H1 (cell line): ENCODE measurements at regions of chr17 and their contacts with region 1.

Region 1: DNA sequence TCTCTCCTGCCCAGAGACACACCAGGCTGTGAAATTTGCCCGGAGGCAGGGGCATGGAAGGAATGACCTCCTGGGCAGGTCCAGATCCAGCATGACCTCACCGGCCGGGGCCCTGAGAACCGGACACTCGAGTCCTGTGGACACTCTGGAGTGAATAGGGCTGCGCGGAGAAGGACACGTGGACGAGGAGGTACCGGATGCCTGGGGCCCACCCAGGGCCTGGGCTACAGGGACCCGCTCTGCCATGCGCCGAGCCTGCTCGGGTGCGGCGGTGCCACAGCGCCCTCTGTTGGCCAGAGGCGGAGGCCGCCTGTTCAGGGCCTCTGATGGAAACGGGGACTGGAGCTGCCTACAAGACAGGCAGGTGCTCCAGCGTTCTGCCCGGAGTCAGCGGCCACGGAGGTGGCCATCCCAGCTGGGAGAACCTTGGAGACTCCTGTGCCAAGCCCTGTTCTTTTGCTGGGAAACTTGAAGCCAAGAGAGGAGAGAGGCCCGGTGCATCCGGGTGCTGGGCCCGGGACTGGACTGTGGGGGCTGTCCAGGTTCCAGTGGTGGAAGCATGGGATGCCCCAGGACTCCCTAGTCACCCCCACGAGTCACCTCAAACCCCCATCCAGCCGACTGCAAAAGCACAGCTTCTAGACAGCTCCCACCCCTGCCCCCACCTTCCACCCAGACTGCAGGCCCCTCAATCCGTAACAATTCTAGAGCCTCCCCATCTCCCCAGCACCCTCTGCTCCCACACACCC is 19.3 kb upstream of the NXPH3 start:
- DNase-seq: peak in 1 of 2 experiments; percentile 98
- H3K4me3 ChIP-seq: peak overlapping the region in 1 of 4 experiments; percentile 15; a peak in 1 of 8 replicates
- H3K27ac ChIP-seq: no peak overlapping the region
- H3K4me1 ChIP-seq: no peaks in the 10 kb centered on the region
- H3K27me3 ChIP-seq: peaks cover 0 to 3% (median 1%) of the 10 kb centered on the region in 4 experiments; a peak in 2 of 7 replicates
- CTCF ChIP-seq: peak; percentile 94 to 98 (median 98)
- EP300 ChIP-seq: peak in 1 of 2 experiments; percentile 36; a peak in 1 of 3 replicates
- POLR2A ChIP-seq: no peak
- RAD21 ChIP-seq: peak; percentile 97 to 99

Region 2: DNA sequence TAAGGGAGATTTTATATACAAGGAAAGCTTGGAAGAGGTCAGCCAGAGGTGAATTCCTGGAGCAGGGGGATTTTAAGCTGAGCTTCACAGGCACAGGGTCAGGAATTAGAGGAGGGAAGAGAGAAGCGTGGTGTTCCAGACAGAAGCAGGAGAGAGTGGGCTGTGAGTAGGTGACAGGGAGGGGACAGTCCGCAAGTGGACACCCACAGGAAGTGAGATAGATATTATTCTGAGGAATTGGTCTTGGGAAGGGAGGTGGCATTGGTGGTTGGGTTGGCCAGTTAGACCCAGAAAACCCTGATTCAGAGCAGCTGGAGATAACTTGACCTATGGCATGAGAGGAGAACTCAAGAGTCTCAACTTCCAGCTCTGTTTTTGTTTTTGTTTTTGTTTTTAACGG is 156.4 kb before region 1 on chr17:
- CTCF ChIA-PET with region 1: interaction called, 138 read pairs
- POLR2A ChIA-PET with region 1: no interaction called
- DNase-seq: no peak
- H3K4me3 ChIP-seq: no peak overlapping the region
- H3K27ac ChIP-seq: no peak overlapping the region
- H3K4me1 ChIP-seq: no peaks in the 10 kb centered on the region
- H3K27me3 ChIP-seq: no peaks in the 10 kb centered on the region
- CTCF ChIP-seq: no peak
- EP300 ChIP-seq: no peak
- POLR2A ChIP-seq: no peak
- RAD21 ChIP-seq: no peak

Region 3: GRCh38 chr17:49434821-49435670 is 121.4 kb before region 1 on chr17:
- CTCF ChIA-PET with region 1: interaction called, 146 read pairs
- POLR2A ChIA-PET with region 1: no interaction called
- DNase-seq: peak; percentile 38 to 87
- H3K4me3 ChIP-seq: no peak overlapping the region
- H3K27ac ChIP-seq: no peak overlapping the region
- H3K4me1 ChIP-seq: peaks cover 0 to 26% (median 12%) of the 10 kb centered on the region in 4 experiments; a peak in 6 of 7 replicates
- H3K27me3 ChIP-seq: peaks cover 0 to 15% (median 4%) of the 10 kb centered on the region in 4 experiments; a peak in 3 of 7 replicates
- CTCF ChIP-seq: peak; percentile 78 to 86 (median 82)
- EP300 ChIP-seq: no peak; a peak in 1 of 3 replicates
- POLR2A ChIP-seq: no peak
- RAD21 ChIP-seq: peak; percentile 88 to 90

Region 4: GRCh38 chr17:49486012-49486641 is 70.3 kb before region 1 on chr17:
- CTCF ChIA-PET with region 1: interaction called, 28 read pairs
- POLR2A ChIA-PET with region 1: no interaction called
- DNase-seq: peak; percentile 75 to 82
- H3K4me3 ChIP-seq: peak overlapping the region; percentile 1 to 46 (median 22); a peak in 5 of 8 replicates
- H3K27ac ChIP-seq: peak overlapping the region; percentile 43; the same call in 1 of the 2 replicates
- H3K4me1 ChIP-seq: peaks cover 7 to 30% (median 22%) of the 10 kb centered on the region in 4 experiments
- H3K27me3 ChIP-seq: no peaks in the 10 kb centered on the region; a peak in 2 of 7 replicates
- CTCF ChIP-seq: no peak
- EP300 ChIP-seq: no peak
- POLR2A ChIP-seq: peak in 1 of 2 experiments; percentile 80; a peak in 2 of 3 replicates
- RAD21 ChIP-seq: no peak

Region 5: GRCh38 chr17:49528966-49529365 is 27.4 kb before region 1 on chr17:
- CTCF ChIA-PET with region 1: interaction called, 22 read pairs
- POLR2A ChIA-PET with region 1: no interaction called
- DNase-seq: no peak
- H3K4me3 ChIP-seq: no peak overlapping the region
- H3K27ac ChIP-seq: no peak overlapping the region
- H3K4me1 ChIP-seq: no peaks in the 10 kb centered on the region; a peak in 1 of 7 replicates
- H3K27me3 ChIP-seq: no peaks in the 10 kb centered on the region
- CTCF ChIP-seq: no peak
- EP300 ChIP-seq: no peak
- POLR2A ChIP-seq: no peak
- RAD21 ChIP-seq: no peak

Region 6: GRCh38 chr17:49616601-49617131 is 60.3 kb after region 1 on chr17:
- CTCF ChIA-PET with region 1: no interaction called
- POLR2A ChIA-PET with region 1: no interaction called
- DNase-seq: no peak
- H3K4me3 ChIP-seq: no peak overlapping the region
- H3K27ac ChIP-seq: no peak overlapping the region
- H3K4me1 ChIP-seq: no peaks in the 10 kb centered on the region
- H3K27me3 ChIP-seq: no peaks in the 10 kb centered on the region
- CTCF ChIP-seq: no peak
- EP300 ChIP-seq: no peak
- POLR2A ChIP-seq: no peak
- RAD21 ChIP-seq: no peak

Region 7: DNA sequence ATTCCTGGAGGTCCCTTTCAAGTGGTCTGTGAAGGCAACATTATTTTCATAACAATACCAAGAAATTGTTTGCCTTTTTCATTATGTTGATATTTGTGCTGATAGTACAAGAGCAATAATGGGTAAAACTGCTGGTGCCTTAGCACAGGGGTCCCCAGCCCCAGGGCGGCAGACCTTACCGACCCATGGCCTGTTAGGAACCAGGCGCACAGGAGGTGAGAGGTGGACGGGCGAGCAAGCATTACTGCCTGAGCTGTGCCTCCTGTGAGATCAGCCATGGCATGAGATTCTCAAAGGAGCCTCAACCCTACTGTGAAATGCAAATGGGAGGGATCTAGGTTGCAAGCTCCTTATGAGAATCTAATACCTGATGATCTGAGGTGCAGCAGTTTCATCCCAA is 106.5 kb after region 1 on chr17:
- CTCF ChIA-PET with region 1: interaction called, 12 read pairs
- POLR2A ChIA-PET with region 1: no interaction called
- DNase-seq: no peak
- H3K4me3 ChIP-seq: no peak overlapping the region
- H3K27ac ChIP-seq: no peak overlapping the region
- H3K4me1 ChIP-seq: no peaks in the 10 kb centered on the region
- H3K27me3 ChIP-seq: no peaks in the 10 kb centered on the region
- CTCF ChIP-seq: no peak
- EP300 ChIP-seq: no peak
- POLR2A ChIP-seq: no peak
- RAD21 ChIP-seq: no peak